ENCODE measurements at regions of chr14 and their contacts with region 1.

Region 1: DNA sequence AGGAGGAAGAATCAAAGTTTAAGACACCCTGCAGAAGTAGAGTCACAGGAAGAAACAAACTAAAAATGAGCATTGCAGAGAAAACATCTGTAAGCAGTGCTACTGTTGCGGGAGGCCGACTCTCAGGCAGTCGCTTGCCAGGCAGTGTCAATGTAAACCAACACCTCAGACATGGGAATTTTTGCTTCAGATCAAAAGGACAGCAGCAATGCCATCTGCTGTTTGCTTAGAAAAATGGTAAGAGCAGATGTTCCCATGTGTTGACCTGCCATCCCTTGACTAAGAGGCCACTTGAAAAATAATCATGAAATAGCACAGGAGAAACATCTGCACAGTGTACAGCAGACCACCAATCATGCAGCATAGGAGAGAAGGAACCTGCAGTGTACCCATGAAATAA is 196.6 kb downstream of the SLC25A21 start:
- DNase-seq: no peak

Region 2: DNA sequence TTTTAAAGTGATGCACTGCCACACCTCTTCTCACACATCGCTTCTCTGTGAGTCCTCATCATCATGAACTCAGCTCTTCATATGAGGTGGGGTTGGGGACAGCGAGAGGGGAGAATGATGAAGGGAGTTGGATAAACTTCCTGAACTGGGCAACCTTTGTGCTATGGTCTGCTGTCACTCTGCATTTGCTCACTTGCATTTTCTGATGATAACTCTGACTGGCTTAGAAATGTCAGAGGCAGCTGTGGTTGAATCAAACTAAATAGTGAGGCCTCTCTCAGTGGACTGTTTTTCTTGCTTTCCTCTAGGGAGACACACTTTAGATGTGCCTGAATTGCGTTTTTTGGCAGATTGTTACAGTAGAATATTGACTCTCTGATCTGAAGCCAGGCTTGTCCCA is 1516.1 kb before region 1 on chr14:
- intact Hi-C with region 1: loop called in 1 of 2 experiments (anchors 10 kb)
- DNase-seq: no peak

Region 3: DNA sequence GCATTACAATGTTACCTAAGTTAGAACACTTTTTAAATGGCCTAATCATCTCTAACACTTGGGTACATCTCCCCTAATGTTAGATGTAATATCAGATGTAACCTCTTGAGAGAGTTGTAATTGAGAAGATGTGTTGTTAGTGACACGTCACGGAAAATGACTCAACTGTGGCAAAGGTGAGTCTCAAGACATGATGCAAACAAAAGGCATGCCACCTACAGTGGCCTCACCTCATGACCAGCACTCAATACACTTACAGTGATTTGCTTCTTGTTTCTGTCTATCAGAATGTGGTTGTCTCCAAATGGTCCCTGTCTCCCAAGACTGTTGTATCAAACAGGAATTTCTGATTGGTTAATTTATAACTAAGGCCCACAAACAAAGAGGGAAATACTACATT is 105.4 kb after region 1 on chr14:
- intact Hi-C with region 1: no loop called
- DNase-seq: no peak